ENCODE measurements at regions of chr19 and their contacts with region 1.

Region 1: GRCh38 chr19:34639491-34640085 is 37.4 kb downstream of the SCGB2B2 start:
- DNase-seq: peak; percentile 82
- ATAC-seq: peak; percentile 31
- H3K4me3 ChIP-seq: no peak overlapping the region
- H3K4me3 Mint-ChIP-seq: no peak overlapping the region
- H3K27ac ChIP-seq: no peak overlapping the region
- H3K27ac Mint-ChIP-seq: no peak overlapping the region
- H3K4me1 ChIP-seq: peaks cover 0 to 4% of the 10 kb centered on the region in 2 donors
- H3K4me1 Mint-ChIP-seq: peaks cover 4% of the 10 kb centered on the region
- H3K27me3 ChIP-seq: no peaks in the 10 kb centered on the region
- H3K27me3 Mint-ChIP-seq: no peaks in the 10 kb centered on the region
- CTCF ChIP-seq: peak; percentile 83

Region 2: GRCh38 chr19:34662919-34663318 is 23.3 kb after region 1 on chr19:
- CTCF ChIA-PET with region 1: interaction called, 10 read pairs
- POLR2A ChIA-PET with region 1: no interaction called
- intact Hi-C with region 1: loop called (anchors 2 kb)
- DNase-seq: peak; percentile 47
- ATAC-seq: peak; percentile 60
- H3K4me3 ChIP-seq: no peak overlapping the region
- H3K4me3 Mint-ChIP-seq: no peak overlapping the region
- H3K27ac ChIP-seq: no peak overlapping the region
- H3K27ac Mint-ChIP-seq: no peak overlapping the region
- H3K4me1 ChIP-seq: peaks cover 0 to 5% of the 10 kb centered on the region in 2 donors
- H3K4me1 Mint-ChIP-seq: peaks cover 9% of the 10 kb centered on the region
- H3K27me3 ChIP-seq: no peaks in the 10 kb centered on the region
- H3K27me3 Mint-ChIP-seq: peaks cover 5% of the 10 kb centered on the region
- CTCF ChIP-seq: peak; percentile 40

Region 3: GRCh38 chr19:34712395-34713261 is 73.0 kb after region 1 on chr19:
- CTCF ChIA-PET with region 1: interaction called, 111 read pairs
- POLR2A ChIA-PET with region 1: no interaction called
- intact Hi-C with region 1: loop called (anchors 1 kb)
- DNase-seq: peak; percentile 83
- ATAC-seq: peak; percentile 56
- H3K4me3 ChIP-seq: no peak overlapping the region
- H3K4me3 Mint-ChIP-seq: no peak overlapping the region
- H3K27ac ChIP-seq: no peak overlapping the region
- H3K27ac Mint-ChIP-seq: no peak overlapping the region
- H3K4me1 ChIP-seq: no peaks in the 10 kb centered on the region
- H3K4me1 Mint-ChIP-seq: no peaks in the 10 kb centered on the region
- H3K27me3 ChIP-seq: peaks cover 0 to 12% (median 2%) of the 10 kb centered on the region in 4 experiments
- H3K27me3 Mint-ChIP-seq: peaks cover 30% of the 10 kb centered on the region
- CTCF ChIP-seq: peak; percentile 80

Region 4: DNA sequence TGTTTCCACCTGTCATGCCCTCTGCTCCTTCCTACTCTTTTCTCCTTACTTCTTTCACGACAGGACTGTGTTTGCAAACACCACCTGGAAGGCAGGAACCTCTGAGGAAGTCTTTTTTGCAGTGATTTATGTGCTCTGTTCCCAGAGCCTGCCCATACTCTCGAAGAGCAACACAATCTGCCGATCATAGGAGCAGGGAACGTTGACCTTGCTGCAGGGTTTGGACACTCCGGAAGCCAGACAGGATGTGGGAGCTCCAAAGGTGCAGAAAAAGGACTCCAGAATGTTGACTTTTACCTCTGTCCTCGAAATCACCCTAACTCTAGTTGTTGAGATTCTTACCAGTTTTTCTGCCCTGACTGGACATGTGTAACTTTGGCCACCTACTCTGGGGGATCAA is 85.8 kb after region 1 on chr19:
- CTCF ChIA-PET with region 1: no interaction called
- POLR2A ChIA-PET with region 1: no interaction called
- intact Hi-C with region 1: no loop called
- DNase-seq: no peak
- ATAC-seq: no peak
- H3K4me3 ChIP-seq: no peak overlapping the region
- H3K4me3 Mint-ChIP-seq: no peak overlapping the region
- H3K27ac ChIP-seq: no peak overlapping the region
- H3K27ac Mint-ChIP-seq: no peak overlapping the region
- H3K4me1 ChIP-seq: no peaks in the 10 kb centered on the region
- H3K4me1 Mint-ChIP-seq: no peaks in the 10 kb centered on the region
- H3K27me3 ChIP-seq: peaks cover 0 to 12% (median 3%) of the 10 kb centered on the region in 4 experiments
- H3K27me3 Mint-ChIP-seq: peaks cover 34% of the 10 kb centered on the region
- CTCF ChIP-seq: no peak

Region 5: GRCh38 chr19:34904846-34905527 is 265.4 kb after region 1 on chr19:
- CTCF ChIA-PET with region 1: no interaction called
- POLR2A ChIA-PET with region 1: no interaction called
- intact Hi-C with region 1: no loop called
- DNase-seq: no peak
- ATAC-seq: no peak
- H3K4me3 ChIP-seq: no peak overlapping the region
- H3K4me3 Mint-ChIP-seq: peak overlapping the region; percentile 3
- H3K27ac ChIP-seq: no peak overlapping the region
- H3K27ac Mint-ChIP-seq: no peak overlapping the region
- H3K4me1 ChIP-seq: no peaks in the 10 kb centered on the region
- H3K4me1 Mint-ChIP-seq: peaks cover 6% of the 10 kb centered on the region
- H3K27me3 ChIP-seq: peaks cover 0 to 45% (median 18%) of the 10 kb centered on the region in 4 experiments
- H3K27me3 Mint-ChIP-seq: peaks cover 59% of the 10 kb centered on the region
- CTCF ChIP-seq: no peak

Measured in B cell (primary cell).